Heart right ventricle (tissue), 16 donors: ENCODE measurements at regions of chr4 and their contacts with region 1.

Region 1: DNA sequence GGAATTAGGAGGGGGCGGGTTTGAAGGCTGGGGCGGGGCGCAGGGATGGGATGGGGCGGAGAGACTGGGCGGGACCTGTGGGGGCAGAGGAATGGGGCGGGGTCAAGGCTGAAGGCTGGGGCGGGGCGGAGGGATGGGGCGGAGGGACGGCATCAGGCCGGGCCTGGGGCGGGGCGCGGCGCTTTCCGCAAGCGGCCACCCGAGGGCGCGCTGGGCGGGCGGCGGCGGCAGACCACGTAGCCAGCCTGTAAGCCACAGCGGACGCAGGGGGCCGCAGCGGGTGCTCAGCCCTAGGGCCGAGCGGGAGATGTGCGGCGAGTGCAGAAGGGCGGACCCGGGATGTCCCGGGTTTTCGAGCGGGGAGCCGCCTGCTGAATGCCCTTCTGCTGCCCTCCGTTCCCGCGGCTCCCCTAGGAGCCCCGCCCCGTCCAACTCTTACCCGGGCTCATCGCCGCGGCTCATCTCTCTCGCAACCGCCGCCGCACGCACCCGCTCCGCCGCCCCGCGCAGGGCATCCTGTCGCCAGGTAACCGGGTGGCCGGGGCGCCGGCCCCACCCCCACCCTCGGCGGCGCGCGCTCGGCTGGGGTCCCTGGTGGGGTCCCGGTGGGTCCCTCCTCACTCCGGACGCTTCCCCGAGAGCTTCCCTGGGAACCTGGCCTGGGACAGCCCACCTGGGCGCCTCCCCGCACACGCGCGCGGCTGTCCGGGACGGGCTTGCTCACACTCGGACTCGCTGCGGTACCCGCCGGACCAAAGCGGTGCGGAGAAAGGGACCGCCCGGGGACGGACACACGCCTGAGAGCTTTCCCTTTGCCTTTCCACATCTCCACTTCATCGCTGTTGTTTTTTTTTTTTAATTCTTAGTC is at the start of gene CCDC110:
- DNase-seq: peak; percentile 96 to 97
- ATAC-seq: peak; percentile 96 to 98 (median 98)
- H3K4me3 ChIP-seq: peak within 1 kb of the TSS; percentile 68 to 98 (median 86)
- H3K27ac ChIP-seq: peak within 1 kb of the TSS in 9 of 10 donors; percentile 40 to 81 (median 77)
- H3K4me1 ChIP-seq: peaks cover 0 to 22% (median 12%) of the 10 kb centered on the region in 9 donors
- H3K27me3 ChIP-seq: peaks cover 0 to 37% (median 0%) of the 10 kb centered on the region in 7 donors
- CTCF ChIP-seq: peak; percentile 61 to 91 (median 75)
- total RNA-seq, gene CCDC110: 0.54 to 2.5 (median 1.9) TPM

Region 2: GRCh38 chr4:184911310-184911709 is 560.2 kb before region 1 on chr4:
- intact Hi-C with region 1: no loop called
- DNase-seq: no peak
- ATAC-seq: no peak
- H3K4me3 ChIP-seq: no peak overlapping the region
- H3K27ac ChIP-seq: no peak overlapping the region
- H3K4me1 ChIP-seq: peaks cover 0 to 6% (median 0%) of the 10 kb centered on the region in 9 donors
- H3K27me3 ChIP-seq: no peaks in the 10 kb centered on the region
- CTCF ChIP-seq: no peak

Region 3: DNA sequence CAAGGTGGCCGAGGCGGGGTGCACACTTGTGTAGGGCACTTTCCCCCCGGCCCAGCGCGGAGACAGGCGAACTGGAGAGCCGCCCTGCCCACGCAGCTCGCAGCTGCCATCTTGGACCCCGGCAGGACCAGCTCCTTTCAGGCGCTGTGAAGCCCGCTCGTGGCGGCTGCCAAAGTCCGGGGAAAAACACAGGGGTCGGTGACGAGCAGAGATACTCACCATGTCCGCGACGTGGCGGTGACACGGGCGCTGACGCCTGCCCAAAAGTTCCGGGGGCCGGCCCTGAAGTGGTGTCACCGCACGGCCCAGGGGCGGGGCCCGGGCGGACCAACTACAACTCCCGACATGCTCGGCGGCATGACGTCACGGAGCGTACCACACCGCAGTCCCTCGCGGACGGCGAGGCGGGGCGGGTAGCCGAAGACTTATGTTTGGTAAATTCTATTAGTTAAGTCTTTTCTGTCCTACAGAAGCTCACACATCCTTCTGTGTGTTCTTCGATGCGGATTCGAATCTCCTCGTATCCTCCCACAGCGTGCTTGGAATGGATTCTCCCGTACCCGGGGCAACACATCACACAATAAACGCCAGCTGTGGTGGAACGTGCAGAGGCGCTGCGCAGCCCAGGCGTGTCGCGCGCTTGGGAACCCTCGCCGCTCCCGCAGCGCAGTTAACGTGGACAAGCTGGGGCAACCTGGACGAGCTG is 45.7 kb before region 1 on chr4 and contains the start of gene UFSP2:
- intact Hi-C with region 1: loop called in 2 of 10 experiments (anchors 2 to 5 kb)
- DNase-seq: peak; percentile 89 to 90
- ATAC-seq: peak; percentile 97 to 99 (median 98)
- H3K4me3 ChIP-seq: peak within 1 kb of the TSS; percentile 50 to 89 (median 75)
- H3K27ac ChIP-seq: peak within 1 kb of the TSS; percentile 89 to 97 (median 95)
- H3K4me1 ChIP-seq: peaks cover 0 to 48% (median 32%) of the 10 kb centered on the region in 9 donors
- H3K27me3 ChIP-seq: no peaks in the 10 kb centered on the region
- CTCF ChIP-seq: no peak
- total RNA-seq, gene UFSP2: 29.4 to 52.4 (median 43.7) TPM

Region 4: GRCh38 chr4:185504098-185505047 is 32.9 kb after region 1 on chr4:
- intact Hi-C with region 1: loop called in 1 of 10 experiments (anchors 5 kb)
- DNase-seq: peak; percentile 81 to 88
- ATAC-seq: peak; percentile 88 to 96 (median 90)
- H3K4me3 ChIP-seq: peak overlapping the region in 4 of 10 donors; percentile 15 to 36 (median 22)
- H3K27ac ChIP-seq: peak overlapping the region in 9 of 10 donors; percentile 42 to 87 (median 77)
- H3K4me1 ChIP-seq: peaks cover 0 to 16% (median 5%) of the 10 kb centered on the region in 9 donors
- H3K27me3 ChIP-seq: peaks cover 0 to 3% (median 0%) of the 10 kb centered on the region in 7 donors
- CTCF ChIP-seq: peak in 2 of 9 donors; percentile 10 to 11

Region 5: DNA sequence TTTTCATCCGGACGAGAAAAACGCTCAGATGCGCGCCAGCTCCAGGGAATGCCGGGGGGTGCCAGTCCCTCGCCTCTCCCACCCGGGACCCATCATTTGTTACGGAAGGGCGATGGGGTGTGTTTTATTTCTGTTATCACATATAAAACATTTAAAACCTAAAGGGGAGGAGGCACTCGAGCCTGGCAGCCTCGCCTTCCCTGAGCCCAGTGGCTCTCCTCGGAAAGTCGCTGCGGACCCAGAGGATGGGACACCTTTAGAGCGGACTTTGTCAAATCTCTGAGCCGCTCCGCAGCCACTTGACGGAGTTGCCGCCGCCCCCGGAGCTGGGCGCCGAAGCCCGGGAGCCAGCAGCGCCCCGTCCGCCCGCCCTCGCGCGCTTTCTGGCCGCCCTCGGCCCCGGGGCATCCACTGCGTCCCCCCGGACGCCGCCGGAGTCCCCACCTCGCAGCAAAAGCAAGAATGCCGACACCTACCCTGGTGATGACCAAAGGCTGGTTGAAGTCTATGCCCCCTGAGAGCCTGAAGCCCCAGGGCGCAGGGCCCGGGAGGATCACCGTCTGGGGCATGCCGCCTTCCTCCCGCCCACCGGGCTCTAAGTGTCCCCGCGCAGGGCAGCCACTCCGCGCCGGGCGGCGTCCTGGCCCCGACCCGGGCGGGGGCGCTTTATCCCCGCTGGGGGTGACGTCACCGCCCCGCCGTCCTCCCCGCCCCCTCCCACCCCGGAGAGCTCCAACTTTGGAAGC is 63.6 kb after region 1 on chr4 and contains the start of gene PDLIM3:
- intact Hi-C with region 1: loop called in 4 of 10 experiments (anchors 5 to 10 kb)
- DNase-seq: peak; percentile 72 to 80
- ATAC-seq: peak; percentile 80 to 95 (median 86)
- H3K4me3 ChIP-seq: peak within 1 kb of the TSS; percentile 63 to 95 (median 79)
- H3K27ac ChIP-seq: peak within 1 kb of the TSS; percentile 90 to 99 (median 95)
- H3K4me1 ChIP-seq: peaks cover 0 to 34% (median 14%) of the 10 kb centered on the region in 9 donors
- H3K27me3 ChIP-seq: peaks cover 0 to 52% (median 4%) of the 10 kb centered on the region in 7 donors
- CTCF ChIP-seq: peak in 1 of 9 donors; percentile 32
- total RNA-seq, gene PDLIM3: 112 to 846 (median 292) TPM

Region 6: GRCh38 chr4:185597532-185598188 is 126.2 kb after region 1 on chr4:
- intact Hi-C with region 1: loop called (anchors 1 to 10 kb)
- DNase-seq: peak; percentile 72 to 82
- ATAC-seq: peak; percentile 2 to 78 (median 50)
- H3K4me3 ChIP-seq: no peak overlapping the region
- H3K27ac ChIP-seq: peak overlapping the region in 9 of 10 donors; percentile 9 to 67 (median 46)
- H3K4me1 ChIP-seq: peaks cover 3 to 61% (median 38%) of the 10 kb centered on the region in 9 donors
- H3K27me3 ChIP-seq: peaks cover 0 to 3% (median 0%) of the 10 kb centered on the region in 7 donors
- CTCF ChIP-seq: peak; percentile 98 to 100 (median 98)

Region 7: DNA sequence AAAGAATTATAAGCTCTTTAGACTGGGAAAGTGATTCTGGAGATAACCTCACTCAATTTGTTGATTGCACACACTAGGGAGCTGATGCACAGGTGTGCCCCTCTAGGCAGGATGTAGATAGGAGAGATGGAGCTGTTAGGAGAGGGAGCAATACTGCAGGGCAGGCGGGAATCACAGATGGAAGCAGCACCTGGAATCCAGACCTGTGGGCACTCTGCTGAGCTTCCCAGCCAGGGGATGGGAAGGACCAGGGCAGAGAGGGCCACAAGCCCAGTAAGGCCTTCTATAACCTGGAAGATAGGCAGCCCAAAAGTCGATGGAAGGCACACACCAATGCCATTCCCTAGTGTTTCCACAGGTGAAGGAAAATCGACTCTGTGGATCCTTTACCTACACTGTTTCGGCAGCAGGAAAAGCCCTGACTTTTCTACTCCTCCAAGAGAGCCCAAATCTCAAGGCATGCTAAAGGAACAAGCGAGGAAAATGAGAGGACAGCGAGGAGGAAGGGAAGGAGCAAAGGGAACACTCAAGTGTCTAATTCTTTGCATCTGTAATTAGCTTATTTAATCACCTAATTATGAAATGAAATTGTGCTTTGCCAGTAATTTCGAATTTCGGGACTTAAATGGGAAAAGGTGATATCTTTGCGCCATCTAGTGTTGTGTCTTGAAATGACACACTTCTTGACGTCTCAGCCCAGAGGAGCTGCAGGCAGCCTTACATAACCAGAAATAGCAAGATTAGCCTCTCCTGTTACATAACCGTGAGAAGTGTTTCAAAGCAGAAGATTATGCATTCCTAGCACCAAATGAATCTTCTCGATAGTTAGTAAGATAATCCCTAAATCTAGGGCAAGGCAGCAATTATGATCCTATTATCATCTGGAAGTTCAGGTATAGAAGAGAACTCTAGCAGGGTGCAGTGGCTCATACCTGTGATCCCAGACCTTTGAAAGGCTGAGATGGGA is 566.5 kb after region 1 on chr4:
- intact Hi-C with region 1: loop called in 2 of 10 experiments (anchors 5 kb)
- DNase-seq: peak in 1 of 2 donors; percentile 73
- ATAC-seq: peak; percentile 69 to 93 (median 88)
- H3K4me3 ChIP-seq: no peak overlapping the region
- H3K27ac ChIP-seq: no peak overlapping the region
- H3K4me1 ChIP-seq: peaks cover 0 to 18% (median 9%) of the 10 kb centered on the region in 9 donors
- H3K27me3 ChIP-seq: peaks cover 0 to 4% (median 0%) of the 10 kb centered on the region in 7 donors
- CTCF ChIP-seq: peak; percentile 67 to 92 (median 84)